HepG2 (cell line): ENCODE measurements at regions of chr2 and their contacts with region 1.

Region 1: DNA sequence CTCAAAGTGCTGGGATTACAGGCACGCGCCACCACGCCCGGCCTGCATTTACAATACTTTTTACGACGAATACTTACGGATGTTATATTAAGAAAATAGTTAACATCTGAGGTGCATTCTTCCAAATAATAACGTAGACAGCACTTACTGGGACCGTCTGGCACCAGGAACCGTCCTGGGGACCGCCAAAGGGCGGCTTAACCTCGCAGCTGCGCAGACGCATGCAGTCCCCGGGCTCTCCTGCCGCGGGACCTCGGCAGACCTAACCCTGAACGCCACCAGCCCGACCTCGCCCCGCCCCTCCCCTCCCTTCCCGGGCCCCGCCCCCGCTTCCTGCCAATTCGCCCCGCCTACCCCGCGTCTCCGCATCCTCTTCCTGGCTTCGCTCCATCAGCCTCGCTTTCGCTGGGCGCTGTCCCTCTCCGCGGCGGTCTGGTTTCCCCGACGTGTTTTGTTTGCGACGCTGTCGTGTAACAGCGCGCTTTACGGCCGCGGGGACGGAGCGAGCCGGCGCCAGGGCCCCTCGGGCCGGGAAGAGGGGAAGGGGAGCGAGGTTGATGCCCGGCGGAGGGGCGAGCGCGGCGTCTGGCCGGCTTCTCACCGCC is at the start of gene CNOT11:
- DNase-seq: peak; percentile 98
- ATAC-seq: peak; percentile 95
- H3K4me3 ChIP-seq: peak within 1 kb of the TSS; percentile 82 to 98 (median 90)
- H3K27ac ChIP-seq: peak within 1 kb of the TSS; percentile 86
- H3K4me1 ChIP-seq: peaks cover 75% of the 10 kb centered on the region
- H3K27me3 ChIP-seq: no peaks in the 10 kb centered on the region; a peak in 1 of 5 replicates
- CTCF ChIP-seq: no peak
- EP300 ChIP-seq: peak in 1 of 2 experiments; percentile 63; a peak in 2 of 4 replicates
- POLR2A ChIP-seq: peak; percentile 96 to 97
- RAD21 ChIP-seq: no peak
- total RNA-seq, gene CNOT11: 100 and 114 TPM in 2 replicates

Region 2: DNA sequence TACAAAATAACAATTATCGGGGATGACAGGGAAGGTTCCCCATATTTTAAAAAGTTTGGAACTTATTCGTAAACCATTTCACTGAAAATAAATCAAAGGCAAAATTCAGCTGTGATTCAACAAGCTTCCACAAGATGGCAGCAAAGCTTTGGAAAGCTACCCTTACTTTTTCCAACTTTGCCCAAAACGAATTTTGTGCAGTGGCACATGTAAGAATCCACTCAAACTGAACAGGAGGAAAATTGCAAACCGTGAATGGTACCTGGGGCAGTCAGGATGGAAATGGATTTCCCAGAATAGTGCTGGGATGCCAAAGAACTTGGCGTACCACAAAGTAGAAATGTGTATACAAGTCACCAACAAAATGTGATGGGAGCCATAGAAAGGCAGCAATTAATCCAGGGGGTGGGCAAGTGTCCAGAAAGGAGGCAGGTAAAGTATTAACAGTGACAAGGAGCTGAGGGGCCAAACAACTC is 239.8 kb before region 1 on chr2:
- CTCF ChIA-PET with region 1: interaction called, 12 read pairs
- POLR2A ChIA-PET with region 1: no interaction called
- in situ Hi-C with region 1: no loop called
- intact Hi-C with region 1: no loop called
- DNase-seq: peak; percentile 50
- ATAC-seq: no peak
- H3K4me3 ChIP-seq: no peak overlapping the region
- H3K27ac ChIP-seq: no peak overlapping the region
- H3K4me1 ChIP-seq: no peaks in the 10 kb centered on the region
- H3K27me3 ChIP-seq: no peaks in the 10 kb centered on the region
- CTCF ChIP-seq: peak; percentile 85
- EP300 ChIP-seq: no peak
- POLR2A ChIP-seq: no peak; a peak in 1 of 4 replicates
- RAD21 ChIP-seq: peak; percentile 82

Region 3: GRCh38 chr2:101089419-101089818 is 163.1 kb before region 1 on chr2:
- CTCF ChIA-PET with region 1: no interaction called
- POLR2A ChIA-PET with region 1: no interaction called
- in situ Hi-C with region 1: no loop called
- intact Hi-C with region 1: no loop called
- DNase-seq: no peak
- ATAC-seq: no peak
- H3K4me3 ChIP-seq: no peak overlapping the region
- H3K27ac ChIP-seq: no peak overlapping the region
- H3K4me1 ChIP-seq: peaks cover 48% of the 10 kb centered on the region
- H3K27me3 ChIP-seq: no peaks in the 10 kb centered on the region
- CTCF ChIP-seq: no peak
- EP300 ChIP-seq: no peak
- POLR2A ChIP-seq: no peak
- RAD21 ChIP-seq: no peak

Region 4: DNA sequence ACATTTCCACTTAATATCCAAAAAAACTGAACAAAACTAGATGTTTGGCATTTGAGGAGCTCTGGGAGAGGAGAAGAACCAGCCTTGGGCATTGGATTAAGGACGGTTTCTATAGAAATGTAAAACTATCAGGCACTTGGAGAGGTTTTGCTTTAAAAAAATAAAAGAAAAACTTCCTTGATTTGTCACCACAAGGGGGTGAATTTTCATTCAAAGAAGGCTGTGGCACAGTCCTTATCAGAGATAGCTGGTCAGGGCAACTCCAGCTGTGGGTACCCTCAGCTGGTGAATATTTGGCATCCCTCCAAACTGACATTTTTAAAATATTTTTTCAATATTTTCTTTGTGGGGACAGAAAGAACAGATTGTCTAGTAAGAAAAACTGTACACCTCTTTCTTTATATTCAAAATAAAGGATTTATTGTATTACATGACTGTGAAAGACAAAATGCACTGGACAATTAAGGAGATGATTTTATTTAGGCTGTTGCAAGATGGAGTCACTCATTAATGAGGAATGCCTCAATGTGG is 55.2 kb before region 1 on chr2:
- CTCF ChIA-PET with region 1: no interaction called
- POLR2A ChIA-PET with region 1: no interaction called
- in situ Hi-C with region 1: no loop called
- intact Hi-C with region 1: loop called (anchors 2 kb)
- DNase-seq: peak; percentile 42
- ATAC-seq: peak; percentile 25
- H3K4me3 ChIP-seq: no peak overlapping the region
- H3K27ac ChIP-seq: no peak overlapping the region
- H3K4me1 ChIP-seq: peaks cover 55% of the 10 kb centered on the region
- H3K27me3 ChIP-seq: no peaks in the 10 kb centered on the region; a peak in 2 of 5 replicates
- CTCF ChIP-seq: 0 out of 2 replicates have a peak, but pooled peaks have one; percentile 23
- EP300 ChIP-seq: no peak
- POLR2A ChIP-seq: no peak
- RAD21 ChIP-seq: no peak

Region 5: DNA sequence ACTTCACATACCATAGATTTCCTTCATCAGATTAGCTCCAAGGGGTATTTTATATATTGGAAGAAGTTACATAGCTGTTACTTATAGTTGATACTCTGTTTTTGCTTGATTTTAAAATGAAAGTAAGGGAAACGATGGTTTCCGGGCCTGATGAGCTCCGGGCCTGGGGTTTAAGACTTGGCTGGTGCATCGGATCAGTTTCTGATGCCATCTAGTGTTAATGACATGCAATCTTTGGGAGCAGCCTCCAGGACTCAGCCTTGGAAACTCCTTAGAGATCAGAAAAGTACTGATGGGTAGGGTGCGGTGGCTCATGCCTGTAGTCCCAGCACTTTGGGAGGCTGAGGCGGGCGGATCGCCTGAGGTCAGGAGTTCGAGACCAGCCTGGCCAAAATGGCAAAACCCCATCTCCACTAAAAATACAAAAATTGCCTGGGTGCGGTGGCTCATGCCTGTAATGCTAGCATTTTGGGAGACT is 47.0 kb before region 1 on chr2:
- CTCF ChIA-PET with region 1: interaction called, 9 read pairs
- POLR2A ChIA-PET with region 1: interaction called, 19 read pairs
- in situ Hi-C with region 1: no loop called
- intact Hi-C with region 1: loop called (anchors 1 kb)
- DNase-seq: peak; percentile 83
- ATAC-seq: peak; percentile 72
- H3K4me3 ChIP-seq: peak overlapping the region; percentile 54 to 66 (median 55)
- H3K27ac ChIP-seq: peak overlapping the region; percentile 30
- H3K4me1 ChIP-seq: peaks cover 51% of the 10 kb centered on the region
- H3K27me3 ChIP-seq: no peaks in the 10 kb centered on the region
- CTCF ChIP-seq: peak; percentile 88
- EP300 ChIP-seq: no peak
- POLR2A ChIP-seq: no peak
- RAD21 ChIP-seq: peak; percentile 75

Region 6: GRCh38 chr2:101238930-101239759 is 13.4 kb before region 1 on chr2:
- CTCF ChIA-PET with region 1: interaction called, 20 read pairs
- POLR2A ChIA-PET with region 1: interaction called, 53 read pairs
- in situ Hi-C with region 1: no loop called
- intact Hi-C with region 1: loop called (anchors 1 kb)
- DNase-seq: peak; percentile 99
- ATAC-seq: peak; percentile 99
- H3K4me3 ChIP-seq: peak overlapping the region in 1 of 3 experiments; percentile 47; a peak in 2 of 6 replicates
- H3K27ac ChIP-seq: peak overlapping the region; percentile 98
- H3K4me1 ChIP-seq: peaks cover 81% of the 10 kb centered on the region
- H3K27me3 ChIP-seq: no peaks in the 10 kb centered on the region
- CTCF ChIP-seq: no peak; the same call in 1 of the 2 replicates
- EP300 ChIP-seq: peak in 1 of 2 experiments; percentile 76; a peak in 2 of 4 replicates
- POLR2A ChIP-seq: peak; percentile 57 to 77
- RAD21 ChIP-seq: no peak

Region 7: DNA sequence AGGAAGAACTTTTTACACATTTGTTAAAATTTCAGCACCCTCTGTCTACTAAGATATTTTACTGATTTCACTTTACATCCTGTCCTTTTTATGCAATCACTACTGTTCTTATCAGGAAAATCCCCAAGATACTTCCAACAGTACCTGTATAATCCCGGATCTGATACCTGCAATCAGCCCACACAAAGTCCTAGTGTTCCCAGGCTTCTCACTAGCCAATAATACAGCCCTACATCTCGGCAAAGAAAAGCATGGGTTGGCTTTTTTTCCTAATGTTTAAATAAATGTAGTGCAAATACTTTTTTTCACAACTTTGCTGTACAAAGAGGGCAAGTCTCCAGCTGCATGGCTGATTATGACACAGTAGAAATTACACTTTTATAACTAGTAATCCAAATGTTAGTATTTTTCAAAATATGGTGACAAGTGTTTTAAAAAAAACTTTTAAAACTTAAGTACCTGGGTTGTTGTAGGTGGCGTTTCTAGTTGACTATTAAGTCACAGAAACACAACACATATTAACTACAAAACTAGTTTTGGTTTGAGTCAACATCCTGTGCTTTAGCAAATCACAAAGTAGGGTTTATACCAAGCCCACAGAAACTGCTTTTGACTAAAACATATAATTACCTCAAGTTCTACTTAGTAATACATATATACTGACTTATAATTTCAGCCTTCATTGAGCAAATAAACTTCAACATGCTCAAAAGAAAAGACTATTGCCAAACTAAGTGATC is 19.7 kb after region 1 on chr2:
- CTCF ChIA-PET with region 1: no interaction called
- POLR2A ChIA-PET with region 1: interaction called, 10 read pairs
- in situ Hi-C with region 1: no loop called
- intact Hi-C with region 1: no loop called
- DNase-seq: no peak
- ATAC-seq: no peak
- H3K4me3 ChIP-seq: no peak overlapping the region
- H3K27ac ChIP-seq: peak overlapping the region; percentile 1
- H3K4me1 ChIP-seq: peaks cover 32% of the 10 kb centered on the region
- H3K27me3 ChIP-seq: no peaks in the 10 kb centered on the region
- CTCF ChIP-seq: no peak
- EP300 ChIP-seq: no peak
- POLR2A ChIP-seq: no peak; a peak in 1 of 4 replicates
- RAD21 ChIP-seq: no peak

Region 8: DNA sequence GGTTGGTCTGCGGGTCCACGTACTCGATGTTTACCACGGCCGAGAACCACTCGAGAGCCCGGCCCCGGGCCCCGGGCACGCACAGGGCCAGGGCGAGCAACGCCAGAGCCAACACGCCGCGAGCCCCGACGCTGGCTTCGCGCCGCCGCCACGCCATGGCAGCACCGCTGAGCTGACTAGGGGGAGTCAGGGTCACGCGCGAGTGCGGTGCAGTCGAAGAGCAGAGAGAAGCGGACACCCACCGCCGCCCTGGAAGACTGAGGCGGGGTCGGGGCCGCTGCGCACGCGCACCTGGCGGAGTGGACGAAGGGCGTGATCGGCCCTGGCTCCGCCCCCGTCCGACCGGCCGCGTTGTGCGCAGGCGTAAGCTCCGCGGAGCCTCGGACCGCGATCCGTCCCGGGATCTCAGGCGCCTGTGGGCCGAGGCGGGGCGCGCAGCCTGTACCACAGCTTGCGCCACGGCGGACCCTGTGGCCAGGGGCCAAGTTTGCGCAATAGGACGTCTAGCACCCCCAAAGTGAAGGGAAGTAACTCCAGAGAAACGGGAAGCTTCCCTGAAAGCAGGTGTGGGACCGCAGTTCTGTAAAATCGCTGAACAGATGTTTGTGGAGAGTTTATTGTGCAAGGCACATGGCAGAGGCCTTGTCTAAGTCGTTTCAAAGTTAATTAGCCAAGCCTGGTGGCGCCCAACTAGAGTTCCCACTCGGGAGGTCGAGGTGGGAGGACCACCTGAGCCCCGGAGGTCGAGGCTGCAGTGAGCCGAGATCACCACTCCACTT is 56.1 kb after region 1 on chr2 and contains the start of gene RNF149:
- CTCF ChIA-PET with region 1: no interaction called
- POLR2A ChIA-PET with region 1: interaction called, 21 read pairs
- in situ Hi-C with region 1: no loop called
- intact Hi-C with region 1: no loop called
- DNase-seq: peak; percentile 88
- ATAC-seq: peak; percentile 86
- H3K4me3 ChIP-seq: peak within 1 kb of the TSS; percentile 76 to 95 (median 93)
- H3K27ac ChIP-seq: peak within 1 kb of the TSS; percentile 85
- H3K4me1 ChIP-seq: peaks cover 65% of the 10 kb centered on the region
- H3K27me3 ChIP-seq: no peaks in the 10 kb centered on the region; a peak in 1 of 5 replicates
- CTCF ChIP-seq: peak; percentile 48
- EP300 ChIP-seq: peak; percentile 76 to 82
- POLR2A ChIP-seq: peak; percentile 90 to 98
- RAD21 ChIP-seq: peak; percentile 49
- total RNA-seq, gene RNF149: 45.7 and 109 TPM in 2 replicates